ENCODE measurements at regions of chr19 and their contacts with region 1.

Region 1: GRCh38 chr19:8654591-8655339 is 24.3 kb downstream of the NFILZ start:
- DNase-seq: no peak
- H3K4me3 ChIP-seq: no peak overlapping the region
- H3K27ac ChIP-seq: no peak overlapping the region
- H3K4me1 ChIP-seq: no peaks in the 10 kb centered on the region
- H3K27me3 ChIP-seq: no peaks in the 10 kb centered on the region
- CTCF ChIP-seq: peak; percentile 86 to 97 (median 90)
- POLR2A ChIP-seq: no peak

Region 2: GRCh38 chr19:9075064-9075949 is 420.5 kb after region 1 on chr19:
- intact Hi-C with region 1: loop called (anchors 10 kb)
- DNase-seq: no peak
- H3K4me3 ChIP-seq: no peak overlapping the region
- H3K27ac ChIP-seq: no peak overlapping the region
- H3K4me1 ChIP-seq: peaks cover 12% of the 10 kb centered on the region
- H3K27me3 ChIP-seq: no peaks in the 10 kb centered on the region
- CTCF ChIP-seq: no peak
- POLR2A ChIP-seq: no peak

Region 3: DNA sequence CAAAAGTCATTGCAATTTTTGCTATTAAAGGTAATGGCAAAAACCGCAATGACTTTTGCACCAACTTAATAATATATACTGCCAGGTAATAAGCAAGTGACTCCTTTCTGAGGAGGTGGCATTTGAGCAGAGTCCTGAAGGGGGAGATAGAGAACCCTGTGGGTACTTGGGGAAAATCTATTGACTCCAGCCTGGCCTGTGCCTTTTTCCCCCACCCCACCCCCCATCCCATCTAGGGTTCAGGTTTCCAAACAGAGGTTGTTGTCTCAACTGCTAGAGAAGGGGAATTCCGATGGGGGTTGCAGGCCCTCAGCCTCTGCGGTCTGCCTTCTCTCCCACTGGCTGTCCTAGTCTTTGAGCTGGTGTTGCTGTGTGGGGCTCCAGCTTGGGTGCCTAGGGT is 1564.9 kb after region 1 on chr19:
- intact Hi-C with region 1: loop called (anchors 10 kb)
- DNase-seq: no peak
- H3K4me3 ChIP-seq: no peak overlapping the region
- H3K27ac ChIP-seq: no peak overlapping the region
- H3K4me1 ChIP-seq: peaks cover 11% of the 10 kb centered on the region
- H3K27me3 ChIP-seq: no peaks in the 10 kb centered on the region
- CTCF ChIP-seq: no peak
- POLR2A ChIP-seq: no peak